HAP-1 (cell line): ENCODE measurements at regions of chr11 and their contacts with region 1.

Region 1: DNA sequence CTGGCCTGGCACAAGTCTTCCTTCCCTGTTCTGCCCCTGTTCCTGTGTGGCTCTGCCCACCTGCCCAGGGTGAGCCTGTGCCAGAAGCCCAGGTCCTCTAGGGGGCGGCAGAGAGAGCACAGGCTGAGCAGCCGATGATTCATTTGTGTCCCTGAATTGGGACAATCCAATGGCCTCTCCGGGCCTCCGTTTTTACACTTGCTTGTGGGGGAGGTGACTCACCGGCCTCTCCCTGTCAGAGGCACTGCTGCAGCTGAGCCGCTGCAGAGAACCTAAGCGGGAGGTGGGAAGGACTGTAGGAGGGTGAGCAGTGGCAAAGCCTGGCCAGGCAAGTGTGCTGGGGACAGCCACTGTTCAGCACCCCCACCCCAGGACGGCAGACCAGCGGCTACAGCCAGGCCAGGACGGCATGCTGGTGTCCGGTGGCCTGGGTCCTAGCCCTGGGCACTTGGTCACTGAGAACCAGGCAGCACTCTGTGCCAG is 65.2 kb upstream of the LMO1 start:
- DNase-seq: peak; percentile 91 to 95
- H3K4me3 ChIP-seq: no peak overlapping the region
- H3K4me1 ChIP-seq: peaks cover 39% of the 10 kb centered on the region
- H3K27me3 ChIP-seq: peaks cover 5% of the 10 kb centered on the region; the same call in 1 of the 2 replicates

Region 2: DNA sequence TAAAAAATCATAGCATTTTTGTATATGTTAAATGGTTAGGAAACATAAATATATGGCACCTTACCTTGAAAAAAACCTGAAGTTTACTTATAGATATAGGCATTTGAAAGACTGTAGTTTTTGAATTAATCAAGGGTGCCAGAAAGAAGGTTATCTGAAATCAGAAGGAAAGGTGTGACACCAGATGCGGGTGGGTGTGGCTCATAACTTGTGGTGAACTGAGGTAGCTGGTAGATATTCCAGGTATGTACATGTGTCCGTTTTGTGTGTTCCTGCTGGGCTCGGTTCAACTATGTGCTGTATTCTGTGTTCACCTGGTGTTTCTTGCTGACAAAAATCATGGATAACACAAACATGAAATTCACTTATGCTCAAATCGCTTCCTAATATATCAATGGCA is 229.5 kb after region 1 on chr11:
- in situ Hi-C with region 1: loop called (anchors 10 kb)
- DNase-seq: no peak
- H3K4me3 ChIP-seq: no peak overlapping the region
- H3K4me1 ChIP-seq: no peaks in the 10 kb centered on the region
- H3K27me3 ChIP-seq: no peaks in the 10 kb centered on the region

Region 3: DNA sequence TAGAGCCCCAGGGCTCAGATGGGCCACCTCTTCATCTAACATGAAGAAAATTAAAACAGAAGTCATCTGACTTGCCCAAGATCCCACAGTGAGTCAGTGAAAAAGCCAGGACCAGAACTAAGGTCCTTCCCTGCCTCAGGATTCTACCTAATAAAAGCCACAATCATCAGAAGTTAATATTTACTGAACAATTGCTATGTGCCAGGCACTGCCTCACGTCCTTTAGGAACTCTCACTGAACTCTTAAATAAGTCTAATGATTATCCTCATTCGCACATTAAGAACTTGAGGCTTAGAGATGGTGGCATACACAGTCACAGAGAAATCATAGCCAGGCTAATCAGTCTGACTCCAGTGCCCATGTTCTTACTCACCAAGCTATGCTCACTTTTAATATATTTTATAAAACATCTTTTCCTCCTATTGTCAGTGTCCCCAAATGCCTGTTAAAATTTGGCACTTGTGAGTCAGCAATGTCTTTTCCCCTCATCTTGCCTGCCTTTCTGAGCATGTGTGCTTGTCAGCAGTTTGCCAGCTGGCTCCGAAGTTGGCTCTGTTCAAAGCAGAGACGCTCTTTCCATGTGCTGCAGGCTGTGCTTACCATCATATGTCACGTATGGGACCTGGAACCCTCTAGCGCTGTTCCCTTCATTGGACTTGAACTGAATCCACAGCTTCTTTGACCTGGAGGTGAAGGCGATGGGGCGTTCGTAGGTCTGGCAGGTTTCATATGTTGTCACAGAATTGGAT is 696.4 kb after region 1 on chr11:
- in situ Hi-C with region 1: no loop called
- DNase-seq: no peak
- H3K4me3 ChIP-seq: no peak overlapping the region
- H3K4me1 ChIP-seq: no peaks in the 10 kb centered on the region
- H3K27me3 ChIP-seq: no peaks in the 10 kb centered on the region